Right ventricle myocardium inferior (tissue), 1 donor: ENCODE measurements at regions of chr11 and their contacts with region 1.

Region 1: DNA sequence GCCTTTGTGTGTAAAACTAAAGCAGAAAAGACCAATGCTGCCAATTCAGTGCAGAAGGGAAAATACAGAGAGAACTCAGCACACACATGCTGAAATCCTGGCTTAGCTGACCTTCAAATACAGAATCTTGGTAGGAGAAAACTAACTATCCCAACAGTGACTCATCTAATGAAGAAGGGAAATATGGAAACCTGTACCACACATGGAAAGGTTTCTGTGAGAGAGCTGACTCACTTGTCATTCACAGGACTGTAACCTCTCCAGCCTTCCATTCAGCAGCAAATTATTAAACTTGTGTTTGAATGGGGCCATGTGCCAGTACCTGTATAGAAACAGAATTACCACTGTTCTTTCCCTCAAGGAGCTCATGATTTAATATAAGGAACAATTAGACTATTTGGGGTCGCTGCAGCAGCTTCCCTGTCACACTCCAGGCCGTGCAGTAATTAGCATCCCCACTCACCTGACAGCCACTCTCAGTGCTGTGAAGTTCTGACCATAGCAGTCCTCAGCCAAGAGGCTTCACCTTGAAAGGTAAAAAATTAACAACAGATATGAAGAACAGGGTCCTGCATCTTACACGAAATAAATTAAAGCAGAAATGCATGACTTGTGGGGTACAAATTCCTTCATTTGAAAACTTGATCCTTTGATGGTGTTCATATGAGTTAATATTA is 53.9 kb downstream of the MSANTD4 start:
- DNase-seq: no peak
- ATAC-seq: no peak

Region 2: DNA sequence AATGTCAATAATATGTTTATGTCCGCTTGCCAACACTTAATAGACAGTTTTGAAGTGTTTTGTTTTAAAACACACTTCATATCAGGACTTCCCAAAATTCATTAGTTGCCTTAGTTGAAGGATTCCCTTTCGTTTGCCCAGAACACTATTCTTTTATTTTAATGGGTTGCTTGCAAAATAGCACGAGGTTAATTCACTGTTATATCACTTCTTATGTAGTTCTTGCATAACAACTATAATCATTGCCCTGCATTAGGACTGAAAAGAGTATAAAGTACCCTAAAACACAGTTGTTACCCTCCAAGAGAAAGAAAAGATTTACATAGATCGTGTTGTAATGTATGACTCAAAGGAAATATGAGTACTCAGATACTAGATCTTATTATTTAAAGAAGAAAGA is 19.0 kb before region 1 on chr11:
- intact Hi-C with region 1: loop called (anchors 1 kb)
- DNase-seq: no peak
- ATAC-seq: no peak